ENCODE measurements at regions of chr10 and their contacts with region 1.

Region 1: DNA sequence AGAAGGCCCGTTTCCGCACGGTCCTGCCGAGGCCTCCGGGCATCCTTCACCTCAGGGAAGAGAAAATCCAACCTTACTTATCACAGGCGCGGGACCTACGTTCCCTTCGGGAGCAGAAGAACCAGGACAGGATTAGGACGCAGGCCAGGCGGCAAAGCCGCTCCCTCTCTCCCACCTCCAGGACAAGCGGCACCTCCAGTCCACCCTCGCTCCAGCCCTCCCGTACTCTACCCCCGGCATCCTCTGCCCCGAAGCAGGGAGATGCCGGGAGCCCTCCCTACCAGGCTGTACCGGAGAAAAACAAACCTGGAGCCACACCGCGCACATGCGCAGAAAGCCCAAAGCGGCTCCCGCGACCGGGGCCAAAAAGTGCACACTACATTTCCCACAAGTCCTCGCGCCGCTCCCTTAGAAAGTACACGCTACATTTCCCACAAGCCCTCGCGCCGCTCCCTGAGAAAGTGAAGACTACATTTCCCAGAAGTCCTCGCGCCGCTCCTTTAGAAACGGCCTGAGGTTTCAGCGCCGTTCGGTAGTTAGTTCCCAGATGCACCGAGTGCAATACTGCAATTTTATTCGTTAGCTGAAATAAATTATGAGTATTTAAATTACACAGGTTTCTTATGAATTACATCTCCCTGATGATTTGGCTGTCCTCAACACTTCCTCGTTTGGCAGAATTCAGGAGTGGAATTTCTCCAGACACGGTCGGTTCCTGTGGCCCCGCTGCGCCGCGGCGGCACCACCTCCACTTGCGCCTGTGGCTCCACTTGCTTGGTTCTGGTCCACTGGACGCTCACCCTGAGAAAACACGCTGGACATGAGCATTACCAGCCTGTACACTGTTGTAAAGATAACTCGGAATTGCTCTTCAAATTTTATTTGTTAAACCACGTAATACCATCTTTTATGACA is 85.6 kb downstream of the ZNF33B start:
- DNase-seq: peak; percentile 96
- ATAC-seq: peak; percentile 90
- H3K4me3 ChIP-seq: peak overlapping the region; percentile 73 to 92 (median 83)
- H3K27ac ChIP-seq: peak overlapping the region; percentile 62
- H3K4me1 ChIP-seq: peaks cover 73% of the 10 kb centered on the region
- H3K27me3 ChIP-seq: no peaks in the 10 kb centered on the region; a peak in 1 of 5 replicates
- CTCF ChIP-seq: no peak
- EP300 ChIP-seq: 0 out of 4 replicates have a peak, but pooled peaks of 1 of the 2 experiments have one; percentile 4
- POLR2A ChIP-seq: peak; percentile 37 to 62; a peak in 3 of 4 replicates
- RAD21 ChIP-seq: no peak

Region 2: GRCh38 chr10:42638055-42638820 is 85.5 kb after region 1 on chr10 and contains the start of gene ZNF33B:
- CTCF ChIA-PET with region 1: no interaction called
- POLR2A ChIA-PET with region 1: no interaction called
- in situ Hi-C with region 1: no loop called
- intact Hi-C with region 1: loop called (anchors 1 kb)
- DNase-seq: peak; percentile 94
- ATAC-seq: peak; percentile 96
- H3K4me3 ChIP-seq: peak within 1 kb of the TSS; percentile 50 to 78 (median 68)
- H3K27ac ChIP-seq: peak within 1 kb of the TSS; percentile 93
- H3K4me1 ChIP-seq: peaks cover 56% of the 10 kb centered on the region
- H3K27me3 ChIP-seq: no peaks in the 10 kb centered on the region
- CTCF ChIP-seq: no peak
- EP300 ChIP-seq: no peak
- POLR2A ChIP-seq: peak; percentile 92 to 94
- RAD21 ChIP-seq: no peak; the same call in 1 of the 2 replicates
- total RNA-seq, gene ZNF33B: 23.5 and 32.9 TPM in 2 replicates

Region 3: GRCh38 chr10:42809670-42810069 is 256.9 kb after region 1 on chr10:
- CTCF ChIA-PET with region 1: no interaction called
- POLR2A ChIA-PET with region 1: no interaction called
- in situ Hi-C with region 1: no loop called
- intact Hi-C with region 1: no loop called
- DNase-seq: no peak
- ATAC-seq: no peak
- H3K4me3 ChIP-seq: no peak overlapping the region
- H3K27ac ChIP-seq: no peak overlapping the region
- H3K4me1 ChIP-seq: no peaks in the 10 kb centered on the region
- H3K27me3 ChIP-seq: no peaks in the 10 kb centered on the region
- CTCF ChIP-seq: no peak
- EP300 ChIP-seq: no peak
- POLR2A ChIP-seq: no peak
- RAD21 ChIP-seq: no peak